Esophagus squamous epithelium (tissue), 5 donors: ENCODE measurements at regions of chr9 and their contacts with region 1.

Region 1: DNA sequence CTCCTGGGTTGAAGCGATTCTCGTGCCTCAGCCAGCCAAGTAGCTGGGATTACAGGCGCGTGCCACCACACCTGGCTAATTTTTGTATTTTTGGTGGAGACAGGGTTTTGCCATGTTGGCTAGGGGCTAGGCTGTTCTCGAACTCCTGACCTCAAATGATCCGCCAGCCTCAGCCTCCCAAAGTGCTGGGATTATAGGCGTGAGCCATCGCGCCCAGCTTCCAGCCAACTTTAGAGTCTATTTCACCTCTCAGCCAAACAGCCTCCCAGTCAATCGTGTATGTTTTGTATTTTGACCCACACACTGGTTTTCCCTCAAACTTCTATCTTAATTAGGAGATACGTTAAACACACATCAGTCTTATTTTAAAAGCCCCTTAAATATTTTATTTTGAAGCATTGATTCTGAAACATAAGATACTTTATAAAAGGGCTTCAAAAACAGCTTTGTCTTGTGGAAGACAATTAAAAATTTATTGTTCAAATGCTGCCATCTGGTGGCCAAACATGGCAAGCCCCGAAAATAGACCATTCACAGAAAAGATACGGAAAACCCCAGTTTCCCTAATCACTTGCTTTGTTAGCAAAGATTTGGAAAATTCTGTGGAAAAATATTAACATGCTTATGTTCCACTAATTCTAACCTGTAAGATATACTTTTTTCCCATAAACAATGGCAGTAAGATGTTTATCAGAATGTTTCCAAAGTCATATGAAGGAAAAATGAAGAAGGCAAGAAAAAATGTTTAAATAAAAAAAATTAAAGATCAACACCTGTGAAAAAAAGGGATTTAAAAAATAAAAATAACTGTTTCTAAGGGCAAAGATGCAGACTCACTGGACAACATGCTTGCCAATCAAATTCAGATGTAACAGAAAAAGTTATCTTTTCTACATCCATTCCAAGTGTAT is 33.1 kb downstream of the APTX start:
- DNase-seq: no peak
- H3K4me3 ChIP-seq: no peak overlapping the region
- H3K27ac ChIP-seq: no peak overlapping the region
- H3K4me1 ChIP-seq: peaks cover 0 to 3% (median 0%) of the 10 kb centered on the region in 3 donors
- H3K27me3 ChIP-seq: no peaks in the 10 kb centered on the region
- CTCF ChIP-seq: peak; percentile 68 to 88 (median 76)
- POLR2A ChIP-seq: no peak

Region 2: GRCh38 chr9:32378993-32379729 is 589.2 kb before region 1 on chr9:
- intact Hi-C with region 1: loop called (anchors 5 kb)
- DNase-seq: no peak
- H3K4me3 ChIP-seq: no peak overlapping the region
- H3K27ac ChIP-seq: no peak overlapping the region
- H3K4me1 ChIP-seq: peaks cover 0 to 19% (median 4%) of the 10 kb centered on the region in 3 donors
- H3K27me3 ChIP-seq: peaks cover 0 to 3% (median 0%) of the 10 kb centered on the region in 4 donors
- CTCF ChIP-seq: peak; percentile 32 to 88 (median 76)
- POLR2A ChIP-seq: no peak

Region 3: DNA sequence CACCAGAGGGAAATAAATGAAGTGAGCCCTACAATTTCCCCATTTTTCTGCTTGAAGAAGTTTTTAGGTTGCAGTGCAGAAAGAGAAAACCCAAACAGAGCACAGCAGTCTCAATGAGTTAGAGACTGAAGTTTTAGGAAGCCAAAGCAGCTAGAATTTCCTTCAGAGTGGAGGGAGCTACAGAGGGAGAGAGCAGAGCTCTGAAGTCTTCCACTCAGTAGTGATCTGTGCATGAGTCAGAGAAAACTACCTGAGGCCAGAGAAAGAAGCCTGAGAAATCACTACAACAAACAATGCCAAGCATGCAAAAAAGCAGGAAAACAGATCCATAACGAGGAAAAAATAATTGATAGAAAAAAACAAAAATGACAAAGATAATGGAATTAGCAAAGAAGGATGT is 377.5 kb before region 1 on chr9:
- intact Hi-C with region 1: loop called (anchors 5 kb)
- DNase-seq: no peak
- H3K4me3 ChIP-seq: no peak overlapping the region
- H3K27ac ChIP-seq: no peak overlapping the region
- H3K4me1 ChIP-seq: no peaks in the 10 kb centered on the region
- H3K27me3 ChIP-seq: peaks cover 0 to 19% (median 0%) of the 10 kb centered on the region in 4 donors
- CTCF ChIP-seq: no peak
- POLR2A ChIP-seq: no peak

Region 4: GRCh38 chr9:32644698-32645097 is 323.7 kb before region 1 on chr9:
- intact Hi-C with region 1: no loop called
- DNase-seq: no peak
- H3K4me3 ChIP-seq: no peak overlapping the region
- H3K27ac ChIP-seq: no peak overlapping the region
- H3K4me1 ChIP-seq: no peaks in the 10 kb centered on the region
- H3K27me3 ChIP-seq: no peaks in the 10 kb centered on the region
- CTCF ChIP-seq: no peak
- POLR2A ChIP-seq: no peak